ENCODE measurements at regions of chr1 and their contacts with region 1.

Region 1: GRCh38 chr1:43414634-43415223 is 25.0 kb downstream of the SZT2 start:
- DNase-seq: peak in 1 of 2 donors; percentile 38
- H3K4me3 ChIP-seq: no peak overlapping the region
- H3K27ac ChIP-seq: no peak overlapping the region
- H3K4me1 ChIP-seq: no peaks in the 10 kb centered on the region
- H3K27me3 ChIP-seq: no peaks in the 10 kb centered on the region
- CTCF ChIP-seq: peak in 2 of 3 donors; percentile 50 to 68
- POLR2A ChIP-seq: no peak

Region 2: GRCh38 chr1:43389326-43390313 is 25.1 kb before region 1 on chr1 and contains the starts of genes MED8 and SZT2:
- intact Hi-C with region 1: loop called (anchors 1 kb)
- DNase-seq: peak; percentile 96
- H3K4me3 ChIP-seq: peak within 1 kb of the TSS; percentile 78 to 88 (median 86)
- H3K27ac ChIP-seq: peak within 1 kb of the TSS; percentile 87 to 89
- H3K4me1 ChIP-seq: peaks cover 10 to 17% of the 10 kb centered on the region in 2 donors
- H3K27me3 ChIP-seq: no peaks in the 10 kb centered on the region
- CTCF ChIP-seq: no peak
- POLR2A ChIP-seq: peak; percentile 82
- total RNA-seq, gene MED8: 38.3 to 42.9 (median 38.8) TPM
- total RNA-seq, gene SZT2: 29.1 to 49.2 (median 44.3) TPM

Measured in breast epithelium (tissue), 4 donors.